T-cell (primary cell): ENCODE measurements at regions of chr7 and their contacts with region 1.

Region 1: DNA sequence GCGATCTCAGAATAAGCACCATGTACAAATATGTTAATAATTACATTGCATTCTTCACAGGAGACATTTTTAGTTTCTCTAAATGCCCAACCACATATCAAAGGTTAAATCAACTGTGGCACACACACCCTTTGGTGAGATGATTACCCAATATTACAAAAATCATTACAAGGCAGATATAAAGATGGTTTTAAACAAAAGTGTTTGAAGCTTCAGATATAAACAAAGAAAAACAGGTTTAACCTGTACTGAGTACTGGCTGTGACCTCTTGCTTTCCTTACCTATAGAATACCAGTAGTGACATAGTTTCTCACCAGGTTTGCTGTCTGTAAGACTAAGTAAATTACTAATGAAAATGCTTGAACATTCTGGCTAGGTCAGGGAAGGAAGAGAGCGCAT is 360.0 kb upstream of the IGFBP3 start:
- DNase-seq: no peak
- ATAC-seq: no peak
- H3K4me3 ChIP-seq: no peak overlapping the region
- H3K4me3 Mint-ChIP-seq: no peak overlapping the region
- H3K27ac ChIP-seq: no peak overlapping the region
- H3K27ac Mint-ChIP-seq: no peak overlapping the region
- H3K4me1 ChIP-seq: no peaks in the 10 kb centered on the region
- H3K4me1 Mint-ChIP-seq: no peaks in the 10 kb centered on the region
- H3K27me3 ChIP-seq: no peaks in the 10 kb centered on the region
- H3K27me3 Mint-ChIP-seq: no peaks in the 10 kb centered on the region

Region 2: DNA sequence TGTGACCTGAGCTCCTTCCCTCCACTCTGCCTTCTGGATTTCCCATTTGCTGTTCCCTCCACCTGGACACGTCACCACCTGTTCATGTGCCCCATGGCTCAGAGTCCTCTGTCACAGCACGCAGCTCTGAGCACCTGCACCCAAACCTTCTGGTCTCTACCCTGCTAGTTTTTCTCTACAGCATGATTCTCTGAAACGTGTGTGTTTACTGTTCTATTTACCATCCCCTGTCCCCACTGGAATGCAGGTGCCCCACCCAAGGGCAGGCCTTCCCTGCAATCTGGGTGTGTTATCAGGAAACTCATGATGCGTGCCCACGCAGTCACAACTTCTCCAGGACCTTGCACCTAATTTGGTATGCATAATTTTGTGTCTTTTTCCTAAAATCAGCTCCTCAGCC is 75.6 kb before region 1 on chr7:
- CTCF ChIA-PET with region 1: no interaction called
- POLR2A ChIA-PET with region 1: interaction called in 1 of 2 experiments, 10 read pairs
- DNase-seq: no peak
- ATAC-seq: no peak
- H3K4me3 ChIP-seq: no peak overlapping the region
- H3K4me3 Mint-ChIP-seq: no peak overlapping the region
- H3K27ac ChIP-seq: no peak overlapping the region
- H3K27ac Mint-ChIP-seq: no peak overlapping the region
- H3K4me1 ChIP-seq: no peaks in the 10 kb centered on the region
- H3K4me1 Mint-ChIP-seq: no peaks in the 10 kb centered on the region
- H3K27me3 ChIP-seq: no peaks in the 10 kb centered on the region
- H3K27me3 Mint-ChIP-seq: no peaks in the 10 kb centered on the region